HCT116 (cell line): ENCODE measurements at regions of chr14 and their contacts with region 1.

Region 1: GRCh38 chr14:102774391-102775153 is 2.7 kb upstream of the TRAF3 start:
- DNase-seq: no peak
- ATAC-seq: peak; percentile 60
- H3K4me3 ChIP-seq: no peak overlapping the region
- H3K27ac ChIP-seq: no peak overlapping the region
- H3K4me1 ChIP-seq: peaks cover 17 to 38% of the 10 kb centered on the region in 2 experiments
- H3K27me3 ChIP-seq: no peaks in the 10 kb centered on the region
- CTCF ChIP-seq: peak; percentile 64 to 81 (median 66)
- POLR2A ChIP-seq: no peak
- RAD21 ChIP-seq: peak; percentile 76

Region 2: GRCh38 chr14:102524466-102525218 is 249.9 kb before region 1 on chr14:
- CTCF ChIA-PET with region 1: no interaction called
- POLR2A ChIA-PET with region 1: no interaction called
- RAD21 ChIA-PET with region 1: no interaction called
- intact Hi-C with region 1: loop called (anchors 10 kb)
- DNase-seq: peak; percentile 98
- ATAC-seq: peak; percentile 92
- H3K4me3 ChIP-seq: peak overlapping the region; percentile 55 to 74
- H3K27ac ChIP-seq: peak overlapping the region; percentile 86
- H3K4me1 ChIP-seq: peaks cover 27 to 54% of the 10 kb centered on the region in 2 experiments
- H3K27me3 ChIP-seq: no peaks in the 10 kb centered on the region
- CTCF ChIP-seq: peak in 2 of 3 experiments; percentile 96 to 98; a peak in 4 of 6 replicates
- POLR2A ChIP-seq: peak; percentile 82
- RAD21 ChIP-seq: no peak

Region 3: DNA sequence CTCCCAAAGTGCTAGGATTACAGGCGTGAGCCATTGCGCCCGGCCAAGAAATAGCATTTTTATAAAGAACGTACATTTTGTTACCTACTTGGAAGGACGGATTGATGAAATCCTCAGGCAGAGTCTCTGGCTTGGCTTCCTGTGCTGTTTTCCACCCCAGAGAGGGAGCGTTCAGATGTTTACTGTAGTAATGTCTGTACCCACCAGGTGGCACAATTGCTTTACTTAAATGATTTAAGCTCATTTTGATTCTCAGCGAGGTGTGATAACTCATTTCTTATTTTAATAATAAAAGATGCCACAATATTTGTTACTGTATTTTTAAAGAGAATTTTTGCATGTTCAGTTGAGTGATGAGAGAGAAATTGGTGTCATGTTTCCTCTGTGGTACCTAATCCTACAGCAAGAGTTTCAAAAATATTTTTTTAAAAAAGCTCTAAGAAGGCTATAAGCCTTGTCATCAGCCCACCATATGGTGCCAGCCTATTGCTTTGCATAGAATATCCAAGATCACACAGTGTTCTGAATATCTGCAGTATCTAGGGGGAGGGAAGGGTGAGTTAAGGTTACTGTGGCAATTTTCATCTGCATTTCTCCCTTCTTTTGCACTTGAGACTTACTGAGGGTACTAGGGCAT is 79.9 kb before region 1 on chr14:
- CTCF ChIA-PET with region 1: interaction called, 11 read pairs
- POLR2A ChIA-PET with region 1: no interaction called
- RAD21 ChIA-PET with region 1: no interaction called
- intact Hi-C with region 1: no loop called
- DNase-seq: peak; percentile 48
- ATAC-seq: peak; percentile 85
- H3K4me3 ChIP-seq: no peak overlapping the region
- H3K27ac ChIP-seq: no peak overlapping the region
- H3K4me1 ChIP-seq: no peaks in the 10 kb centered on the region; a peak in 3 of 4 replicates
- H3K27me3 ChIP-seq: no peaks in the 10 kb centered on the region
- CTCF ChIP-seq: peak; percentile 59; a peak in 5 of 6 replicates
- POLR2A ChIP-seq: no peak
- RAD21 ChIP-seq: peak; percentile 75

Region 4: DNA sequence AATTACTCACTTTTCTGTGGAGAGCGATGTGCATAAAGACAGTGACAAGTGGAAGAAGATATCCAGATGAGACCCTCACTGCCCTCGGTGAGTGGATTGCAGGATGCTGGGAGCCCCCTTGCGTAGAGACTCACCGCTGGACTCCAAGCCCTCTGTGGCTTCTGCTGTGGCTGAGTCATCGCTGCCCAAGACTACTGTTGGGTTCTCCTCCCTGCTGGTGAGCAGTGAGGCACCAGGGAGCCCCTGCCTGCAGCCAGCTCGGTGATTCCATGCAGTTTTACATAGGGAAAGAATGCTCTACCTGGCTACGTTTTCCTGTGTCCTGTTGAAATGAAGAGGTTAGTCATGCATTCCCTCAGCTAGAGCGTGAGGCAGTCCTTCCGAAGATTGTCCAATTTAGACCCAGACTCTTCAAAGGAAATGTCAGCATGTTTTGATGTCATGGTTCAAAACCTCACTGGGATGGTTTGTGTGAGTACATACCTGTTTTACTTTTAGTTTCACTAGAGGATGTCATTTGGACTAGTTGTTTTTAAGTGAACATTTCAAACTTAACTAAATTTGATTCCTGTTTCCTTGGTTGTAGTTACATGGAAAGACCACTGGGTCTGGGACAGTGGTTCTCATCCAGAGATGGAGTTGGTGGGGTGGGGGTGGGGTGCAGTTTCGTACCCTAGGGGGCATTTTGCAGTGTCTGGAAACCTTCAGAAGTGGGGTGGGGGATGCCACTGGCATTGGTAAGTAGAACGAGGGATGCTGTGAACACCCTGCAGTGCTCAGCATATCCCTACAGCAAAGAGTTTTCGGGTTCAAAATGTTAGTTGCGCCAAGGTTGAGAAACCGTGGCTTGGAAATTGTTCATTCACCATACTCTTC is 31.0 kb after region 1 on chr14:
- CTCF ChIA-PET with region 1: interaction called, 3 read pairs
- POLR2A ChIA-PET with region 1: no interaction called
- RAD21 ChIA-PET with region 1: no interaction called
- intact Hi-C with region 1: loop called (anchors 2 kb)
- DNase-seq: peak; percentile 68
- ATAC-seq: peak; percentile 80
- H3K4me3 ChIP-seq: peak overlapping the region; percentile 1 to 41; a peak in 3 of 4 replicates
- H3K27ac ChIP-seq: peak overlapping the region; percentile 88
- H3K4me1 ChIP-seq: peaks cover 44 to 68% of the 10 kb centered on the region in 2 experiments
- H3K27me3 ChIP-seq: no peaks in the 10 kb centered on the region
- CTCF ChIP-seq: peak in 2 of 3 experiments; percentile 20 to 43; a peak in 4 of 6 replicates
- POLR2A ChIP-seq: no peak
- RAD21 ChIP-seq: peak; percentile 42; the same call in 1 of the 2 replicates

Region 5: GRCh38 chr14:102917469-102918211 is 143.1 kb after region 1 on chr14:
- CTCF ChIA-PET with region 1: no interaction called
- POLR2A ChIA-PET with region 1: no interaction called
- RAD21 ChIA-PET with region 1: no interaction called
- intact Hi-C with region 1: loop called (anchors 1 kb)
- DNase-seq: peak; percentile 18
- ATAC-seq: peak; percentile 71
- H3K4me3 ChIP-seq: no peak overlapping the region
- H3K27ac ChIP-seq: no peak overlapping the region
- H3K4me1 ChIP-seq: no peaks in the 10 kb centered on the region
- H3K27me3 ChIP-seq: no peaks in the 10 kb centered on the region
- CTCF ChIP-seq: peak; percentile 75 to 79 (median 78)
- POLR2A ChIP-seq: no peak
- RAD21 ChIP-seq: peak; percentile 90